Heart right ventricle (tissue), 16 donors: ENCODE measurements at regions of chrX and their contacts with region 1.

Region 1: DNA sequence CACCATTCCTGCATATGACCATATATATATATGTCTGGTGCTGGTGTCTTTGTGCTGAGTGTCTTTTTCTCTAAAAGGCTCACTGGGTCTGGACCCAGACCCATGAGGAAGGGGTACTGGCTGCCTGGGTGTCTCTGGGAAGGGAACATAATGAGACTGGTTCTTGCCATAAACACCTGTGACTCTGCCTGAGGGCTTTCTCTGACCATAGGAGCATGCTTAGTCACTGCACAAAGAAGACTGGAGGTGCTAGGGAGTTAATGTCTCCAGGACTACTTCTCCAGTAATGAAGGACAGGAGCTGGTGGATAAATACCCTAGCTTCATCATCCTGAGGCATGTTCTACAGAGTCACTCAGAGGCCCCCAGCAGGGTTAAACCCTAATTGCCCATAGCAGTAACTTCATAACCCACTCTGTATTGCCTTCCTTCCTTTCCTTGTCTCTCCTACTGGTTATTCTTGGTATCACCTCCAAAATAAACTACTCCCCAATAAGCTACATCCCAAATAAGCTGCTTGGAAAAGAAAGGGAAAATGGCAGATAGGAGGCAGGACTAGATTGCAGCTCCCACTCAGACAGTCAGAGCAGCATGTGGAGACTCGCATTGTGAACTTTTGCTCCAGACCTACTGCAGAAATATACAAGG is 47.2 kb upstream of the CASK start:
- DNase-seq: no peak
- ATAC-seq: no peak
- H3K4me3 ChIP-seq: no peak overlapping the region
- H3K27ac ChIP-seq: no peak overlapping the region
- H3K4me1 ChIP-seq: no peaks in the 10 kb centered on the region
- H3K27me3 ChIP-seq: peaks cover 0 to 34% (median 0%) of the 10 kb centered on the region in 7 donors
- CTCF ChIP-seq: no peak

Region 2: GRCh38 chrX:42028109-42028508 is 57.6 kb after region 1 on chrX:
- intact Hi-C with region 1: loop called in 1 of 10 experiments (anchors 10 kb)
- DNase-seq: no peak
- ATAC-seq: no peak
- H3K4me3 ChIP-seq: no peak overlapping the region
- H3K27ac ChIP-seq: no peak overlapping the region
- H3K4me1 ChIP-seq: no peaks in the 10 kb centered on the region
- H3K27me3 ChIP-seq: peaks cover 0 to 12% (median 0%) of the 10 kb centered on the region in 7 donors
- CTCF ChIP-seq: no peak